ENCODE measurements at regions of chr7 and their contacts with region 1.

Region 1: DNA sequence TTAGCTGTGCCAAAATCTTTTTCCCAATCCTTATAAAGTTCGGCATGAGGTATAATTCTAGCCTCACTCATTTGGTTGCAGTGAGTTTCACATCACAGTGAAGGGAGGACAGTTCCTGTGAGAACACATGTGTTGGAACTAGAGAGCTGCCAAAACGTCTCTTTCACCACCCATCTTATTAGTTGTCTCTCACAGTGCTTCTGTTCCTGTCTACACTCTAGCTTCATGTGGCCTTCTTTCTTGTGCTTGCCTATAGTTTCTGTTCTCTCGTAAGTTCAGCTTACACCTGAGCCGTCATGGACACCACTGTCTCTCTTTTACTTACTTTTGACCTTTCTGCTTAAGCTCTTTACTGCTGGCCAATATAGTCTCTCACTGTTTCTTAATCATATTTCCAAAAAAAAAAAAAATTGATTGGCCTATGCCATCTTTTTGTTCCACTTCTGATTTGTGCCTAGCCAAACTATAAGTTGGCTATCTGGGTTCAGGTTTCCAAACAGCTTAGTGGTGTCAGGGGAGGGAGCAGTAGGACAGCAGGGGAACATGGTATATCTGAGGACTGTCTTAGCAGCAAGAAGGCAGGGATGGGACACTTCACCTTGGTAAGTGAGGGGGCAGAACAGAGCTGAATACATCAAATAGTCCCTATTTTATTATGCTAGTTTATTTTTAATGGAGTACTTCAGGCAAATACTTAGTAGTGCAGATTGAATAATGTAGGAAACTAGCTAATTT is 38.0 kb downstream of the ZNRF2 start:
- DNase-seq: peak; percentile 21
- H3K4me3 Mint-ChIP-seq: peak overlapping the region; percentile 73
- H3K27ac Mint-ChIP-seq: peak overlapping the region; percentile 96
- H3K4me1 Mint-ChIP-seq: peaks cover 59% of the 10 kb centered on the region
- H3K27me3 Mint-ChIP-seq: no peaks in the 10 kb centered on the region

Region 2: GRCh38 chr7:30062591-30062990 is 259.8 kb before region 1 on chr7:
- CTCF ChIA-PET with region 1: no interaction called
- POLR2A ChIA-PET with region 1: no interaction called
- DNase-seq: no peak
- H3K4me3 Mint-ChIP-seq: no peak overlapping the region
- H3K27ac Mint-ChIP-seq: no peak overlapping the region
- H3K4me1 Mint-ChIP-seq: peaks cover 4% of the 10 kb centered on the region
- H3K27me3 Mint-ChIP-seq: no peaks in the 10 kb centered on the region

Region 3: DNA sequence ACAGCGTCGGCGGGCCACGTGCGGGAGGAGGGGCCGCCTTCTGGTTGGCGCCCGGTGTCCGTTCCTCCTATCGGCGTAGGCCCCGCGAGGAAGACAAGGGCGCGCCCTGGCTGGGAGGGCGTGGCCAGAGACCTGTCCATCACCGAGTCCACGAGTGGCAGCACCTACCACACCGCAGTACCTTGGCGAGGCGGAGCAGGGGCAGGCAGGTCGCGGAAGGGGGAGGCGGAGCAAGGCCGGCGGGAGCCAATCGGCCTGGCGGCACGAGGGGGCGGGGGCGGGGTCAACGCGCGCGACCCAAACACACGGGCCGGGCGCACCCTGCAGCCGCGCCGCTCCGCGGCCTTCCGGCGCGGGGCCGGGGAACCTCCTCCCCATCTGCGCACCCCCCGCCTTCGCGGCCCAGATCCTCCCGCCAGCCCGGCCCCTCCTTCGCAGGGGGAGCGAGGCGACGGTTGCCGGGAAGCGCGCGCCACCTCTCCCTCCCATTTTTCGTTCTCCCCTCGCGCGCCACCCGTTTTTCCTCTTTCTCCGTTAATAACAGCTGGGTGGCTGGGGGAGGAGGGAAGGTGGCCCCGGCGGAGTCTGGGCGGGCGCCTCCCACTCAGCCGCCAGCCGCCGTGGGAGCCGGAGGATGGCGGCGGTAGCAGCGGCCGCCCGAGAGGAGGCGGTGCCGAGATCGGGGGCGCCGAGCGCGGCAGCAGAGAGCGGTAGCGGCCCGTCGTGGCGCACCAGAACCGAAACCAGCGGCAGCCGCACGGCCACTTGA is 38.0 kb before region 1 on chr7 and contains the start of gene ZNRF2:
- CTCF ChIA-PET with region 1: interaction called, 5 read pairs
- POLR2A ChIA-PET with region 1: interaction called, 62 read pairs
- DNase-seq: peak; percentile 99
- H3K4me3 Mint-ChIP-seq: peak within 1 kb of the TSS; percentile 75
- H3K27ac Mint-ChIP-seq: peak within 1 kb of the TSS; percentile 83
- H3K4me1 Mint-ChIP-seq: peaks cover 40% of the 10 kb centered on the region
- H3K27me3 Mint-ChIP-seq: no peaks in the 10 kb centered on the region
- total RNA-seq, gene ZNRF2: 17.9 to 18.5 TPM

Region 4: DNA sequence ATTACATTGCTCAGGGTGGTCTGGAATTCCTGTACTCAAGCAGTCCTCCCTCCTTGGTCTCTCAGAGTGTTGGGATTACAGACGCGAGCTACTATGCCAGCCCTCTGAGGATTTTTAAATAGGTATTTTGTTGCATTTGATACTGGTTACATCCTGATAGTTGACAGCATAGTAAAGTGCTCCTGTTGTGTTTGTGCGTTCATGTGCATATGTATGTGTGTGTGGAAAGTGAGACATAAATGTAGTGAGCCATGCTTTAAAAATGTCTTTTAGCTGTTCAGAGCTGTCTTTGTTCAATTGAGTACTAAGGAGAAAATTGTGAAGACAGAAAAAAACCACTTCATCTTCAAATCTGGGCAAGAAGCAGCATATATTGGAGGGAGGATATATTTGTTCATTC is 10.3 kb before region 1 on chr7:
- CTCF ChIA-PET with region 1: interaction called, 4 read pairs
- POLR2A ChIA-PET with region 1: interaction called, 12 read pairs
- DNase-seq: no peak
- H3K4me3 Mint-ChIP-seq: no peak overlapping the region
- H3K27ac Mint-ChIP-seq: no peak overlapping the region
- H3K4me1 Mint-ChIP-seq: peaks cover 20% of the 10 kb centered on the region
- H3K27me3 Mint-ChIP-seq: no peaks in the 10 kb centered on the region

Region 5: DNA sequence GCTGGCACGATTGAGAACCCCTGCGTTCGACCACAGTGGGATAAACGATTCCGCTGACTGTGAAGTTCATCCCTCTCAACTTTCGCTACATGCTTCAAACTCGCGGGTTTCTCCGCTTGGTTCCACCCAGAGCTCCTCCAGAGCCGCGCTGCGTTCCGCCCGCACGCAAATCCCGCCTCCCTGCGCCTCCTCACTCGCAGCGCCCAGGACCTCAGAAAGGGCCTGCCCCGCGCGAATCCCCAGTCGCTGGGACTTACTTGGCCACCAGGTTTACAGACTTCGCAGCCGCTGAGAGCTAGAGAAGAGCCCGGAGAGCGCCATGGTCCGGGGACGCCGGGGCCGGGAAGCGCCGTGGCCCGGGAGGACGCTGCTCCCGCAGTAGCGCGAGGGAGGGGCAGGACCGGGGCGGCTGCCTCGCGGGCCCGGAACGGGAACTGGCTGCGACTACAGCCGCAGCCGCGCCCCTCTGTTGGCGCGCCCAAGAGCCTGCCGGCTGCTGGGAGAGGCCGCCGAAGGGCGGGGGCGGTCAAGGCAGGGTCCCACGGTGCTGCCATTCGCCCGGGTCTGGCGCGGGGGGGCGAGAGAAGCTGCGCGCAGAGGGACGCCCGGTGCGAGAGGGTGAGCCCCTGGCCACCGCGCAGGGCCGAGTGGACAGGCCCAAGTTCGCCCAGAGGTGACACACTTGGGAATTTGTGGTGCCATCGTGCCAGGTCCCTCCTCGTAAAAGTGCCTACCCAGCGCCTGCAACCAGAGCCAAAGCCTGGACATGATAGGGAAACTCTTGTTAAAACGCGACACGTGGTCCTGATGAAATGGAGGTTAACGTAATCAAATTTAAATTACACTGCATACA is 156.1 kb after region 1 on chr7 and contains the start of gene NOD1:
- CTCF ChIA-PET with region 1: no interaction called
- POLR2A ChIA-PET with region 1: interaction called, 23 read pairs
- DNase-seq: peak; percentile 75
- H3K4me3 Mint-ChIP-seq: peak within 1 kb of the TSS; percentile 93
- H3K27ac Mint-ChIP-seq: peak within 1 kb of the TSS; percentile 87
- H3K4me1 Mint-ChIP-seq: peaks cover 55% of the 10 kb centered on the region
- H3K27me3 Mint-ChIP-seq: no peaks in the 10 kb centered on the region
- total RNA-seq, gene NOD1: 19.6 to 22.6 TPM

Region 6: GRCh38 chr7:30594549-30595435 is 272.4 kb after region 1 on chr7 and contains the start of gene GARS1:
- CTCF ChIA-PET with region 1: no interaction called
- POLR2A ChIA-PET with region 1: interaction called, 10 read pairs
- DNase-seq: peak; percentile 93
- H3K4me3 Mint-ChIP-seq: peak within 1 kb of the TSS; percentile 97
- H3K27ac Mint-ChIP-seq: peak within 1 kb of the TSS; percentile 98
- H3K4me1 Mint-ChIP-seq: peaks cover 53% of the 10 kb centered on the region
- H3K27me3 Mint-ChIP-seq: no peaks in the 10 kb centered on the region
- total RNA-seq, gene GARS1: 260 to 264 TPM

Measured in activated CD4-positive, alpha-beta memory T cell treated with anti-CD3 and anti-CD28 coated beads, Interleukin-2, amount 10 ng/mL, durations not matched to agents 7 days and 5 days (primary cell).